SK-N-SH (cell line): ENCODE measurements at regions of chr4 and their contacts with region 1.

Region 1: GRCh38 chr4:183716302-183716701 is 57.2 kb downstream of the TRAPPC11 start:
- DNase-seq: no peak
- H3K4me3 ChIP-seq: no peak overlapping the region
- H3K27ac ChIP-seq: no peak overlapping the region
- H3K4me1 ChIP-seq: no peaks in the 10 kb centered on the region
- H3K27me3 ChIP-seq: no peaks in the 10 kb centered on the region
- CTCF ChIP-seq: no peak
- EP300 ChIP-seq: no peak
- RAD21 ChIP-seq: no peak

Region 2: GRCh38 chr4:183645326-183645725 is 71.0 kb before region 1 on chr4:
- CTCF ChIA-PET with region 1: no interaction called
- POLR2A ChIA-PET with region 1: no interaction called
- DNase-seq: no peak
- H3K4me3 ChIP-seq: no peak overlapping the region
- H3K27ac ChIP-seq: no peak overlapping the region
- H3K4me1 ChIP-seq: no peaks in the 10 kb centered on the region
- H3K27me3 ChIP-seq: no peaks in the 10 kb centered on the region
- CTCF ChIP-seq: no peak
- EP300 ChIP-seq: no peak
- RAD21 ChIP-seq: no peak

Region 3: GRCh38 chr4:183700404-183700803 is 15.9 kb before region 1 on chr4:
- CTCF ChIA-PET with region 1: interaction called, 11 read pairs
- POLR2A ChIA-PET with region 1: no interaction called
- DNase-seq: no peak
- H3K4me3 ChIP-seq: no peak overlapping the region
- H3K27ac ChIP-seq: no peak overlapping the region
- H3K4me1 ChIP-seq: no peaks in the 10 kb centered on the region
- H3K27me3 ChIP-seq: no peaks in the 10 kb centered on the region
- CTCF ChIP-seq: no peak
- EP300 ChIP-seq: no peak
- RAD21 ChIP-seq: no peak

Region 4: GRCh38 chr4:183773790-183774189 is 57.5 kb after region 1 on chr4:
- CTCF ChIA-PET with region 1: no interaction called
- POLR2A ChIA-PET with region 1: no interaction called
- DNase-seq: no peak
- H3K4me3 ChIP-seq: no peak overlapping the region
- H3K27ac ChIP-seq: no peak overlapping the region
- H3K4me1 ChIP-seq: peaks cover 0 to 7% of the 10 kb centered on the region in 2 experiments; a peak in 1 of 4 replicates
- H3K27me3 ChIP-seq: no peaks in the 10 kb centered on the region
- CTCF ChIP-seq: no peak
- EP300 ChIP-seq: no peak
- RAD21 ChIP-seq: no peak

Region 5: GRCh38 chr4:183905081-183905592 is 188.8 kb after region 1 on chr4 and contains the start of gene STOX2:
- CTCF ChIA-PET with region 1: no interaction called
- POLR2A ChIA-PET with region 1: no interaction called
- DNase-seq: peak; percentile 93
- H3K4me3 ChIP-seq: peak within 1 kb of the TSS; percentile 58 to 62
- H3K27ac ChIP-seq: peak within 1 kb of the TSS in 1 of 2 experiments; percentile 95; a peak in 2 of 4 replicates
- H3K4me1 ChIP-seq: peaks cover 0 to 3% of the 10 kb centered on the region in 2 experiments; a peak in 2 of 4 replicates
- H3K27me3 ChIP-seq: peaks cover 46% of the 10 kb centered on the region
- CTCF ChIP-seq: no peak
- EP300 ChIP-seq: 0 out of 4 replicates have a peak, but pooled peaks of 1 of the 2 experiments have one; percentile 39
- RAD21 ChIP-seq: peak; percentile 17; the same call in 1 of the 2 replicates
- polyA plus RNA-seq, gene STOX2: 0.16 and 0.49 TPM in 2 replicates